ENCODE measurements at regions of chrX and their contacts with region 1.

Region 1: GRCh38 chrX:129637217-129638109 is 17.3 kb downstream of the APLN start:
- DNase-seq: peak; percentile 43 to 85
- H3K4me3 ChIP-seq: no peak overlapping the region
- H3K27ac ChIP-seq: no peak overlapping the region
- H3K4me1 ChIP-seq: no peaks in the 10 kb centered on the region
- H3K27me3 ChIP-seq: no peaks in the 10 kb centered on the region; a peak in 2 of 7 replicates
- CTCF ChIP-seq: peak; percentile 67 to 76 (median 74)
- EP300 ChIP-seq: no peak
- POLR2A ChIP-seq: no peak
- RAD21 ChIP-seq: peak; percentile 72 to 81

Region 2: GRCh38 chrX:129577473-129577872 is 60.0 kb before region 1 on chrX:
- CTCF ChIA-PET with region 1: no interaction called
- POLR2A ChIA-PET with region 1: no interaction called
- DNase-seq: no peak
- H3K4me3 ChIP-seq: no peak overlapping the region
- H3K27ac ChIP-seq: no peak overlapping the region
- H3K4me1 ChIP-seq: no peaks in the 10 kb centered on the region
- H3K27me3 ChIP-seq: no peaks in the 10 kb centered on the region
- CTCF ChIP-seq: no peak
- EP300 ChIP-seq: no peak
- POLR2A ChIP-seq: no peak
- RAD21 ChIP-seq: no peak

Region 3: GRCh38 chrX:129626020-129626419 is 11.4 kb before region 1 on chrX:
- CTCF ChIA-PET with region 1: interaction called, 23 read pairs
- POLR2A ChIA-PET with region 1: no interaction called
- DNase-seq: no peak
- H3K4me3 ChIP-seq: no peak overlapping the region
- H3K27ac ChIP-seq: no peak overlapping the region
- H3K4me1 ChIP-seq: peaks cover 0 to 4% (median 0%) of the 10 kb centered on the region in 4 experiments; a peak in 1 of 7 replicates
- H3K27me3 ChIP-seq: no peaks in the 10 kb centered on the region
- CTCF ChIP-seq: no peak
- EP300 ChIP-seq: no peak
- POLR2A ChIP-seq: no peak
- RAD21 ChIP-seq: no peak

Region 4: GRCh38 chrX:129690435-129690834 is 53.0 kb after region 1 on chrX:
- CTCF ChIA-PET with region 1: interaction called, 14 read pairs
- POLR2A ChIA-PET with region 1: no interaction called
- DNase-seq: no peak
- H3K4me3 ChIP-seq: no peak overlapping the region
- H3K27ac ChIP-seq: no peak overlapping the region
- H3K4me1 ChIP-seq: peaks cover 0 to 9% (median 4%) of the 10 kb centered on the region in 4 experiments; a peak in 4 of 7 replicates
- H3K27me3 ChIP-seq: no peaks in the 10 kb centered on the region
- CTCF ChIP-seq: no peak
- EP300 ChIP-seq: no peak
- POLR2A ChIP-seq: no peak
- RAD21 ChIP-seq: no peak

Region 5: DNA sequence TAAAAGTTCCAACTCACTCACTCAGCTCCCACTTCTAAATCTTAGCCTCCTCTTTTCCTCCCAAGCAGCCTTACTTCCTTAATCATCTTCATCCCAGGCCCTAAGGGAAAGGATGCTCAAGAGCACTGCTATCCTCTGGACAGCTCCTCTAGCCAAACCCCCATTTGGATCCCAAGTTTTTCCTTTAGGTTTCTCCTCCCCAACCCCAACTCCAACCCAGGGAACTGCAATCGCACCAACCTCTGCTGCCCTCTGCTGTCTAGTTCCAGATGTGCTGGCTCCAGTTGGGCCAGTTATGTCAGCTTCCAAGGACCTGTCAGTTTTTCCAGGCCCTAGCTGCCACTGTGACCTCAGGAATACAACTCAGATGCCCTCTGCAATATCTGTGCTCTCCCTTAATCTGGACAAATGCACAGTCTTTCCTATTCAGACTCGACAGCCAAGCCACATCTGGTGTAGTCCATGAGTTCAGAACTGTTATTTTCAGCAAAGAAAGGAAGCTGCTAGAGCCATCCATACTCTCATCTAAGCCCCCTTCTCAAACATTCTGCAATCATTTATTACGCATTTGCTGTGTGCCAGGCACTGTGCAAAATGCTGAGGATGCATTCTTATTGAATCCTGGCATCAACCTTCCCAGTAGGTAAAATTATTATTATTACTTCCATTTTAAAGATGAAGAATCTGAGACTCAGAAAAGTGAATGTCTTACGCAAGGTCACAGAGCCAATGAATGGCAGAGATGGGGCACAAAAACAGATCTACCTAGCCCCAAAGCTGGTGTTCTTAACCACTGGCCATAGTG is 89.0 kb after region 1 on chrX:
- CTCF ChIA-PET with region 1: interaction called, 144 read pairs
- POLR2A ChIA-PET with region 1: no interaction called
- DNase-seq: peak; percentile 34 to 75
- H3K4me3 ChIP-seq: no peak overlapping the region
- H3K27ac ChIP-seq: no peak overlapping the region
- H3K4me1 ChIP-seq: peaks cover 0 to 2% (median 0%) of the 10 kb centered on the region in 4 experiments; a peak in 2 of 7 replicates
- H3K27me3 ChIP-seq: no peaks in the 10 kb centered on the region; a peak in 1 of 7 replicates
- CTCF ChIP-seq: peak; percentile 70 to 93 (median 82)
- EP300 ChIP-seq: no peak
- POLR2A ChIP-seq: no peak
- RAD21 ChIP-seq: peak; percentile 94 to 98

Region 6: DNA sequence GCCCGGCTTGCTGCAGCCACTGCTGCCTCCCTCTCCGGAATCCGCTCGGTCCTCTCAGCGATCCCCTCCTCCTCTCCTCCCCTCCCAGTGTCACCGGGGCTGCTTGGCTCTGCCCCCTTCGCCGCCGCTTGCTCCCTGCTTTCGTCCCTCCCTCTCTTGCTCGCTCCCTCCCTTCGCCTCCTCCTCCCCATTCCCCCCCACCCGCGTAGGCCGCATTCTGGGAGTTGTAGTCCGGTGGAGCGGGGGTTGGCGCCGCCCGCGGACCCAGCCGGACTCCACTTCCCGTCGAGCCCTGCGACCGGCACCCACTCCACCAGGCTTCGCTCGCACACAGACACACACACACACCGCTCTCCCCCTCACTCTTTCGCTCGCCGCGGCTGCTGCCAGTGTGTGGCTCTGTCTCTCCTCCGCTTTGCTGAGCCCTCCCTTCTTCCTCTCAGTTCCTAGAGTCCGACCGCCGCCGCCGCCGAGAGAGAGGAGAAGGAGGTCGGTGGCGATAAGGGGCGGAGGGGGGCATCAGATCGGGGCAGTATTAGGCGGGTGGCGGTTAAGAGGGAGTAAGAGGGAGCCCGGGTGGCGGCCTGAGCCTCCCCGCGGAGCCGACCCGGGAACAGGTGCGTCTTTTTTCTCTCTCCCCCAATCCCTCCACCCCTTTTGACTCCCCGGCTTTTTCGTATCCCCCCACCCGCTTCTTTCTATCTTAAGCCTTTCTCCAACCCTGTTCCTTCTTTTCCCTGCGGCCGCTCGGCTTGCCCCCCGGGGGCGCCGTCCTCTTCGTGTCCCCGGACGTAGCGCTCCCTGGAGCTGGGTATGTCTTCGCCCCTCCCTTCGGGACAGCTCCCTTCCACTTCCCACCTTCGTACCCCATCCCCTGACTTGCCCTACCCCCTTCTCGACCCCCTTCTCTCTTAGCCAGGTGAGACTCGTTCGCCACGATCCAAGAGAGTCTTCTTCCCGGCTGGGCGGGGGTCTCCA is 345.1 kb after region 1 on chrX and contains the start of gene BCORL1:
- CTCF ChIA-PET with region 1: no interaction called
- POLR2A ChIA-PET with region 1: no interaction called
- DNase-seq: peak; percentile 64 to 75
- H3K4me3 ChIP-seq: peak within 1 kb of the TSS in 2 of 4 experiments; percentile 30 to 34; a peak in 5 of 8 replicates
- H3K27ac ChIP-seq: no peak within 1 kb of the TSS
- H3K4me1 ChIP-seq: peaks cover 0 to 5% (median 1%) of the 10 kb centered on the region in 4 experiments; a peak in 1 of 7 replicates
- H3K27me3 ChIP-seq: peaks cover 4 to 45% (median 36%) of the 10 kb centered on the region in 4 experiments
- CTCF ChIP-seq: no peak
- EP300 ChIP-seq: no peak
- POLR2A ChIP-seq: no peak
- RAD21 ChIP-seq: no peak
- total RNA-seq, gene BCORL1: 6.2 and 9.0 TPM in 2 replicates